Activated CD4-positive, alpha-beta memory T cell treated with anti-CD3 and anti-CD28 coated beads for 36 hours (primary cell): ENCODE measurements at regions of chr4 and their contacts with region 1.

Region 1: GRCh38 chr4:101730291-101731117 is 60.0 kb upstream of the BANK1 start:
- DNase-seq: peak; percentile 68
- H3K4me3 Mint-ChIP-seq: no peak overlapping the region
- H3K27ac Mint-ChIP-seq: no peak overlapping the region
- H3K4me1 Mint-ChIP-seq: no peaks in the 10 kb centered on the region
- H3K27me3 Mint-ChIP-seq: peaks cover 6% of the 10 kb centered on the region

Region 2: GRCh38 chr4:100421361-100421978 is 1309.0 kb before region 1 on chr4:
- CTCF ChIA-PET with region 1: no interaction called
- POLR2A ChIA-PET with region 1: no interaction called
- intact Hi-C with region 1: loop called (anchors 10 kb)
- DNase-seq: no peak
- H3K4me3 Mint-ChIP-seq: no peak overlapping the region
- H3K27ac Mint-ChIP-seq: no peak overlapping the region
- H3K4me1 Mint-ChIP-seq: no peaks in the 10 kb centered on the region
- H3K27me3 Mint-ChIP-seq: peaks cover 1% of the 10 kb centered on the region

Region 3: DNA sequence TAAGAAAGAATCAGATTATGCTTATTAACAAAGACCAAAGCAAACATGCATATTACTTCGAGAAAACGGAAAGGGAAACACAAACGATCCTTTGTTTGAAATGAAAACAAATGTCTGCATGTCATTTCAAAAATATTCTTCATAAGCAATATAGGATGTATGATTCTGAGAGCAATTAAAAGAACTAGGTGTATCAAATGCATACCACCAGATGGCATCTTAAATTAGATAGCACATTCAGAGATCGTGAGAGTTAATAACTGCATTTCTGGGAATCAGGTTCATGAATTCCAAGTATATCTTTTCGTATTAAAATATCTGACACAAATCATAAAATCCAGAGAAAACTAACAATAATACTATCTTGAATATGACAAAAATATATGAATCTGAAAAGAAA is 542.7 kb before region 1 on chr4:
- CTCF ChIA-PET with region 1: interaction called, 4 read pairs
- POLR2A ChIA-PET with region 1: no interaction called
- intact Hi-C with region 1: loop called (anchors 1 kb)
- DNase-seq: no peak
- H3K4me3 Mint-ChIP-seq: no peak overlapping the region
- H3K27ac Mint-ChIP-seq: no peak overlapping the region
- H3K4me1 Mint-ChIP-seq: peaks cover 20% of the 10 kb centered on the region
- H3K27me3 Mint-ChIP-seq: no peaks in the 10 kb centered on the region

Region 4: DNA sequence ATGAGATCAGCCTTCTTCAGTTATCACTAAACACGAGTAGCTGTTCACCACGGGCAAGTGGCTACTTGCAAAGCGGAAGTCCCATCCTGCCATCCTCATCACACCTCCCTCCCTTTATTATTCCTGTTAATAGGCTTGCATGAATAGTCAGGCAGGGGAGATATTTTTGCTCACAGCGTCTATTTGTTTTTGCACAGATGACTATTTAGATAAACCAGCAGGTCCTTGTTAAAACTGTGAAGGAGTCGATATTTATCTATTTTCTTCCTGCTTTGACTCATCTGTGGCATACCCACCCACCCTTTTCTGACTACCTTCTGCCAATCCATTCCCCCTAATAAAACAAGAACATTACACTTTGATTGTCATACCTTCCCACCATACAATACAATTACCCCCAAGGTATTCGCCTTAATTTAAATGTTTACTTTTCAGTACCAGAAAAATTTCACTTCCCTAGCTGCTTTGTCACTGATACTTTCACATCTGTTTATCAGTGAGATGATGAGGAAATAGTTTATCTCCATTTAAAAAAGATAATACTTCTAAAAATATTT is 36.6 kb before region 1 on chr4:
- CTCF ChIA-PET with region 1: no interaction called
- POLR2A ChIA-PET with region 1: no interaction called
- intact Hi-C with region 1: no loop called
- DNase-seq: no peak
- H3K4me3 Mint-ChIP-seq: no peak overlapping the region
- H3K27ac Mint-ChIP-seq: no peak overlapping the region
- H3K4me1 Mint-ChIP-seq: no peaks in the 10 kb centered on the region
- H3K27me3 Mint-ChIP-seq: peaks cover 2% of the 10 kb centered on the region

Region 5: DNA sequence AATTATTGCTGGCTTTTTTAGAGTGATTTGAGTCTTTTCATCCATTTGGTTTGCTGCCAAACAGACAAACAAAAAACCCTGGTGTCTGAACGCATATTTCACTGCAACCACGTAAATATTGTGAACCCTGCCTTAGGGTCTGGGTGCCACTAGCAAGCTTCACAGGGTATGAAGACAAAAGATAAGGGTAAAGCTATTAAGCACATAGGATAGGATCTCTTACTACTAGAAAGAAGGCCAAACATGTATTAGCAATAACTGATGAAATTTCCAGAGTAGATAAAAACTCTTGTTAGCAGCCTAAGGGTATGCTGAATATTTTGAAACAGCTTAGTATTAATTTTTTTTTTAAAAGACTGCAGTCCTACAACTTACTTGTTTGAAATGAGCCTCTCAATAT is 203.4 kb after region 1 on chr4:
- CTCF ChIA-PET with region 1: no interaction called
- POLR2A ChIA-PET with region 1: no interaction called
- intact Hi-C with region 1: no loop called
- DNase-seq: no peak
- H3K4me3 Mint-ChIP-seq: no peak overlapping the region
- H3K27ac Mint-ChIP-seq: no peak overlapping the region
- H3K4me1 Mint-ChIP-seq: no peaks in the 10 kb centered on the region
- H3K27me3 Mint-ChIP-seq: no peaks in the 10 kb centered on the region

Region 6: DNA sequence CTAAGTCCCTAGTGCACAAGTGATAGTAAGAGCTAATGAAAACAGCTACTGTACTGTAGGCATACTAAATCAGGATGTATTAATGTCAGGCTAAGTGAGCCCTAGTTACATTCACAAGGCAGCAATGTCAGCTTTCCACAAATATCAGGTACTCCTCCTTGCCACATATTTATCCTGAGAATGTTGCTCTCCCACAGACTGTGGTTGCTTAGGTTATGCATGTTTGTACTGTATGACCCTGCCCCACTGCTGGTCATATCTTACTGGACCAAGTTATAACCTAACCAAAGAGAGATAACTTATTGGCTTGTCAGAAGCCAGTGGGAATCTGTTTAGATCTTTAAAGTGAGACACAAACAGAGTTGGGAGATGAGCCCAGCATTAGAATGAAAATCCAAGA is 373.8 kb after region 1 on chr4:
- CTCF ChIA-PET with region 1: no interaction called
- POLR2A ChIA-PET with region 1: no interaction called
- intact Hi-C with region 1: no loop called
- DNase-seq: no peak
- H3K4me3 Mint-ChIP-seq: no peak overlapping the region
- H3K27ac Mint-ChIP-seq: no peak overlapping the region
- H3K4me1 Mint-ChIP-seq: no peaks in the 10 kb centered on the region
- H3K27me3 Mint-ChIP-seq: no peaks in the 10 kb centered on the region

Region 7: DNA sequence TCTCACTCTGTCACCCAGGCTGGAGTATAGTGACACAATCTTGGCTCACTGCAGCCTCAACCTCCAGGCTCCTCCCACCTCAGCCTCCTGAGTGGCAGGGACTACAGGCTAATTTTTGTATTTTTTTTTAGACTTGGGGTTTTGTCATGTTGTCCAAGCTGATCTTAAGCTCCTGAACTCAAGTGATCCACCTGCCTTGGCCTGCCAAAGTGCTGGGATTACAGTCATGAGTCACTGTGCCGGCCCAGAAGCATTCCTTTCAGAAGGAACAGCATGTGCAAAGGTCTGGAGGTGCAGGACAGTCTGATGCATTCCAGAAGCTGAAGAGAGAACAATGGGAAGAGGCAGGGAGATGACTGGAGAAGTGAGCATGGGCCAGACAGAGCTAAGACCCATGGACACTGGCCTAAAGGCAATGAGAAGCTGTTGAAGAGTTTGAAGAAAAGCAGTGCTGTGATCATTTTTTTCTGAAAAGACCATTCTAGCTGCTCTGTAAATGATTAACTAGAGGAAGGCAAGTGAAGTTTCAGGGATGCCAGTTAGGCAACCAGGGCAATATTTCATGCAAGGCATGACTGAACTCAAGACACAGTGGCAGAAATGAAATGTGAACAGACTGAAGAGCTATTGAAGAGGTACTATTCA is 987.1 kb after region 1 on chr4:
- CTCF ChIA-PET with region 1: no interaction called
- POLR2A ChIA-PET with region 1: no interaction called
- intact Hi-C with region 1: no loop called
- DNase-seq: no peak
- H3K4me3 Mint-ChIP-seq: no peak overlapping the region
- H3K27ac Mint-ChIP-seq: no peak overlapping the region
- H3K4me1 Mint-ChIP-seq: peaks cover 5% of the 10 kb centered on the region
- H3K27me3 Mint-ChIP-seq: no peaks in the 10 kb centered on the region